Dorsolateral prefrontal cortex (tissue), 120 donors: ENCODE measurements at regions of chr1 and their contacts with region 1.

Region 1: DNA sequence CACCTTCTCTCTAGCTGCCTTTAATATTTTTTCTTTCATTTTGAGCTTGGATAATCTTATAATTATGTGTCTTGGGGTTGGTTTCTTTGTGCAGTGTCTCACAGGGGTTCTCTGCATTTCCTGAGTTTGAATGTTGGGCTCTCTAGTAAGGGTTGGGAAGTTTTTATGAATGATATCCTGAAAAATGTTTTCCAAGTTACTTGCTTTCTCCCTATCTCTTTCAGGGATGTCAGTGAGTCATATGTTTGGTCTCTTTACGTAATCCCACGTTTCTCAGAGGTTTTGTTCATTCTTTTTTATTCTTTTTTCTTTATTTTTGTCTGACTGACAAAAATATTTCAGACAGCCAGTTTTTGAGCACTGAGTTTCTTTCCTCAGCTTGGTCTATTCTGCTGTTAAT is 55.4 kb upstream of the CCDC190 start:
- DNase-seq: no peak
- H3K4me3 ChIP-seq: no peak overlapping the region
- H3K27ac ChIP-seq: peak overlapping the region in 33 of 59 donors; percentile 0 to 81 (median 40)
- H3K27me3 ChIP-seq: no peaks in the 10 kb centered on the region
- CTCF ChIP-seq: no peak

Region 2: DNA sequence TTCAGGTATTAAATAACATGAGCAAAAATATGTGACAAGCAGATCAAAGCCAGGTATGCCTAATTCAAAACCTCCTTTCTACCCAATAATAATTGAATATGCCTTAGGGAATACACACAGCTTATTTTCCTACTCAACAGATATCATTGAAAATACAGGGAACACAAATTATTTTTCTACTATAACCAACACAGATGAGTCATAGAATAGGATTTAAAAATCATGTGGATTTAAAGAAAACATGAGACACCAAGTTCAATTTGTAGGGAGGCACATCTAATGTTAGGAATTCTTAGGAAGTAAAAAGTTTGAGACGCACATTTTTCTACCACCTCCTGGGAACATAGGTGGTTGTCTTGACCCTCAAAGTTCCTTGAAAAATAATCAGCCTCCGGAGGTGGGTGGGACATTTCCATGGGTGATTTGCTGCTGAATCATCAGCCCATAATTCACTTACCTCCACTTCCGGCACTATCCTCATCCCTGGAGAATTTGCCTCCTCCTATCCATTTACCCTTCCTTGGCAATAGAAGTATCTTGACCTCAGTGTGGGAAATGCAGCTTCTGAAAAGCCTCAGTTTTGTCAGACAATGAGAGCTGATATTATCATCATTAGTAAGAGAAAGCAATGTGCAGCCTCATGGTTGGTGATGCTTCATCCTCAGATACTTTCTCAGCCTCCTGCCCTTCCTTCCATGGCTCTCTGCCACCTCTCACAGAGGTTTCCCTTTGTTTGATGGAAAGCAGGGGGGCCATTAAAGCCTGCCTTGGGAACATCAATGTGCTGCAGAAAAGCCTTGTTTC is 119.2 kb after region 1 on chr1:
- intact Hi-C with region 1: loop called in 1 of 2 experiments (anchors 2 kb)
- DNase-seq: no peak
- H3K4me3 ChIP-seq: no peak overlapping the region
- H3K27ac ChIP-seq: no peak overlapping the region
- H3K27me3 ChIP-seq: no peaks in the 10 kb centered on the region
- CTCF ChIP-seq: no peak

Region 3: DNA sequence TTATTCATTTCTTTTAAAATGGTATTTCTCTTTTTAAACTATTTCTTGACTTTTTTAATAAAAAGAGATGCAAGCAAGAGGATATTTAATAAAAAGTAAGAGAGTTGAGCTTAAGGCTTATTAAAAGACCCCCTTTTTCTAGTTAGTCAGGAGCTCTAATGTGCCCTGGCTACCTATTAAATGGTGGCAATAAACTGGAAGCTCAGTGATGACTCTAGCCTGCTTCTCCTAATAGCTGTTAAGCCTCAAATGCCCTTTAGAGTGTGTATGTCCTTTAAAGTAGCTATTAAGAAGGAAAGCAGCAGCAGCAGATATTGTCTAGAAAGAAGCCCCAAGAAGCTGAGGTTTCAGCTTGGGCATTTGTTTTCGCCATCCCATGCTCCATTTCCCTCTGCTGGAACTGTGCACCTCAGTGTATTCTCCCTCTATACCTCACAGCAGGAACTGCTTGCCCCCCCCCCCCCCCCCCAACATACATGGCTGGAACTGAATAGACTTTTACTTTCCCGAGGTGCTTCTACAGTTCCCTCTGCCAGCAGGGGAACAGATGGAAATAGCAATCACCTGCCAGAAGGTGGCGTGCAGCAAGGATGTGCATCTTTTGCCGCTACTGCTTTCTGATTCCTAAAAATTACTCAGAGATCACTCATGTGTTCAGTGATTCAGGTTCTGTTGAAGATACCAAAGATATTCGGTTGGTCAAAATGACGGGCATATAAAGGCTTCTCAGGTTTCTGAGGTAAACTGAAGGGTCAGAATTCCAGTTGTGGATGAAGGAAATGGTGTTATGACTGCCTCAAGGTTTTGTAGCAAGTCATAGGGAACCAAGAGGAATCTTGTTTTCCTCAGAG is 155.2 kb after region 1 on chr1:
- intact Hi-C with region 1: loop called in 1 of 2 experiments (anchors 2 kb)
- DNase-seq: peak in 7 of 10 donors; percentile 22 to 63 (median 56)
- H3K4me3 ChIP-seq: peak overlapping the region in 58 of 59 donors; percentile 18 to 78 (median 56)
- H3K27ac ChIP-seq: peak overlapping the region in 41 of 59 donors; percentile 1 to 91 (median 67)
- H3K27me3 ChIP-seq: peaks cover 0 to 14% (median 0%) of the 10 kb centered on the region in 45 donors
- CTCF ChIP-seq: peak in 54 of 56 donors; percentile 31 to 73 (median 47)